Endothelial cell of umbilical vein (primary cell): ENCODE measurements at regions of chr7 and their contacts with region 1.

Region 1: DNA sequence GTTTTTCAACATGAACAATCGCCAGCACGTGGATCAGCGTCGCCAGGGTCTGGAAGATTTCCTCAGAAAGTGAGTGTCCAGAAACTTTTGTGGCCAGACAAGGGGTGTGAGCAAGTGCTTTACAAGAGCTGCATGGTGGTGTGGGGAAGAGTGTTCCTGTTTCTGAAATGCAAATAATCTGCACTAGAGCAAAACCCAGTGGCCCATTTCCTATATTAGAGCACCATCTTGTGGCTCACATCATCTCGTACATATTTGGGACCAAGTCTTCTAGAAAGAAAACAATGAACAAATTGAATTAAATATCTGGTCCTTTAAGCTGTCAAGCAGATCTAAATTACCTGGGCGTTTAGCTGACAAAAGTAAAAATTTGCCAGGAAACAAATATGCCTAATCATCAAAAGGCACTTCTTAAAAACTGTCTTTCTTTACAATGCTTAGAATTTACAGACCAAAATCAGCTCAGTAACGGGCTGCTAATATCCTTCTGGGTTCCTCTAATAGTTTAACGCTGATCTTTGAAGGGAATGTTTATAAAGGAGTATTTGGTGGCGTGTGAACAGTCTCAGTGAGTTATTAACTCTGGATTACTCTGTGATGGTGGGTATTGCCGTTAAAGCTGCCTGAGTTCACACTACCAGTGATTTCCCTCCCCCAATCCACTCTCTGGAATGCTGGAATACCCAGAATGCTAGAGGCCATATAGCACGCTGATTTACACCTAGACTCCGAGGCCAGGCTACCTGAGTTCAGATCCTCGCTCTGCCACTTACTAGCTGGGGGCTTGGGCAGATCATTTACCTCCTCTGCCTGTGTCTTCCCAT is 73.6 kb downstream of the SNX10 start:
- DNase-seq: peak; percentile 88
- H3K4me3 ChIP-seq: no peak overlapping the region
- H3K27ac ChIP-seq: no peak overlapping the region
- H3K4me1 ChIP-seq: peaks cover 15% of the 10 kb centered on the region
- H3K27me3 ChIP-seq: peaks cover 0 to 8% of the 10 kb centered on the region in 2 experiments
- CTCF ChIP-seq: peak; percentile 56 to 60
- POLR2A ChIP-seq: no peak

Region 2: DNA sequence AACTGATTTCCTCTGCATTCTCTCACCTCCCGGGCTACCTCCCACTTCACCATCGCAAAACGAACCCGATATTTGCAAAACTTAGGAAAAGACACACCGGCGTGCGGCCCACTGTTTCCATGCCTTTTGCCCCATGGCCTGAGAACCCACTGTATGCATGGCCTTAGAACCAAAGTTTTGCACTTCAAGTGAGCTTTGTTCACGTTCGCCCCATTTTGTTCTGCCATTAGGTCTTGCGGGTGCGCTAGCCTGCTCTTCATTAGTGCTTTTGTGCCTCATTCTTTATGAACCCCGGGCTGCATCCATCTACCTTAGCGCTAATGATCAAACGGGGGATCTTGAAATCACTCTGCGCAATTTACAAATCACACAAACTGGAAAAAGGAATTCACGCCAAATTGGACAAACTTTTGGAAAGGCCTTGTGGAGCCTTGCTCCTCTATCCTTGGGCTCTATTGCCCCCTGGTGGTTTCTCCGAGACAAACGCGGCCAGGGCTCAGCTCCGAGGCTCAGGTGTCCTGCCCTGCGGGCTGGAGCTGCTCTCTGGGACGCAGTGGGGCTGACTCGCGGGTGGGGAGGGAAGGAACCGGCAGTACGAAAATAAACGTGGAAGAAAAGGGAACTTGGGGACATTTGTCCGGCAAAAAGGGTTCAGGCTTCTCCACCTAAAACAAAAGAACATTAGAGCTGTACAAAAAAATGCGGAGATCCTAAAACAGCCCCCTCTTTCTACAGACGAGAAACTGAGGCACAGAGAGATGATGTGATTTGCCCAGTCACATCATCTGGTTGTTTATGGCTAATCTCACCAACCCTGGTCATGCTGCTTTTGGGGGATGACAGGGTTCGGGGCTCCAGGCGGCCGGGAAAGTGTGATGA is 513.7 kb before region 1 on chr7:
- CTCF ChIA-PET with region 1: interaction called, 13 read pairs
- POLR2A ChIA-PET with region 1: interaction called, 3 read pairs
- dilution Hi-C with region 1: no loop called
- intact Hi-C with region 1: loop called (anchors 1 kb)
- DNase-seq: peak; percentile 79
- H3K4me3 ChIP-seq: no peak overlapping the region
- H3K27ac ChIP-seq: no peak overlapping the region
- H3K4me1 ChIP-seq: peaks cover 30% of the 10 kb centered on the region
- H3K27me3 ChIP-seq: peaks cover 9 to 11% of the 10 kb centered on the region in 2 experiments
- CTCF ChIP-seq: peak; percentile 77 to 87
- POLR2A ChIP-seq: no peak

Region 3: GRCh38 chr7:26090927-26091519 is 274.3 kb before region 1 on chr7:
- CTCF ChIA-PET with region 1: interaction called, 233 read pairs
- POLR2A ChIA-PET with region 1: no interaction called
- dilution Hi-C with region 1: no loop called
- intact Hi-C with region 1: loop called (anchors 1 kb)
- DNase-seq: peak; percentile 74
- H3K4me3 ChIP-seq: no peak overlapping the region
- H3K27ac ChIP-seq: no peak overlapping the region
- H3K4me1 ChIP-seq: no peaks in the 10 kb centered on the region
- H3K27me3 ChIP-seq: peaks cover 0 to 3% of the 10 kb centered on the region in 2 experiments
- CTCF ChIP-seq: peak; percentile 54 to 62
- POLR2A ChIP-seq: no peak

Region 4: GRCh38 chr7:26328498-26329390 is 36.5 kb before region 1 on chr7:
- CTCF ChIA-PET with region 1: no interaction called
- POLR2A ChIA-PET with region 1: no interaction called
- dilution Hi-C with region 1: no loop called
- intact Hi-C with region 1: no loop called
- DNase-seq: no peak
- H3K4me3 ChIP-seq: no peak overlapping the region
- H3K27ac ChIP-seq: no peak overlapping the region
- H3K4me1 ChIP-seq: no peaks in the 10 kb centered on the region
- H3K27me3 ChIP-seq: no peaks in the 10 kb centered on the region
- CTCF ChIP-seq: no peak
- POLR2A ChIP-seq: no peak

Region 5: DNA sequence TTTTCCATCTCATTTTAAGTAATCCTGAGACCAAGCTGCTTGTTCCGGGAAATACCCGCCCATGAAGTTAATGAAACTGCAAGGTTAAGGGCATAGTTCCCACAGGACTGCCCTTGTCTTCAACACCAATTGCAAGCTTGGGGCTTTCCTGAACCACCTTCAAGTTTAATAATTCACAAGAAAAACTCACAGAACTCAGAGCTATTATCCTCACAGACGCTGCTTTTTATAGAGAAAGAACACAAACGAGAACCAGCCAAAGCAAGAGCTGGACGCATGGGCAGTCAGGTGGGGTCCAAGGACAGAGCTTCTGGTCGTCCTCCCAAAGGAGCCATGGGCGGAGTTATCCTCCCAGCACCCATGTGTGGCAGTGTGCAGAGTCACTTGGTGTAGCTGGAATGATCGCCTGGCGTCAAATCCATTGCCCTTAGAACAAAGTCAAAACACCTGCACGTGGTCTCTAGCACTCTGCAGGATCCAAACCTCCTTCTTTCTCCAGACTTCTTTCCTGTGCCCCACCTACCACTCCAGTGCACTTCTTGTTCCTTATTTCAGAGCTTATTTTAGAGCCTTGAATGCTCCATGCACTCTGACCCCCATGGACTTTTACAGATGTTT is 16.9 kb before region 1 on chr7:
- CTCF ChIA-PET with region 1: interaction called, 10 read pairs
- POLR2A ChIA-PET with region 1: no interaction called
- dilution Hi-C with region 1: no loop called
- intact Hi-C with region 1: no loop called
- DNase-seq: no peak
- H3K4me3 ChIP-seq: no peak overlapping the region
- H3K27ac ChIP-seq: no peak overlapping the region
- H3K4me1 ChIP-seq: no peaks in the 10 kb centered on the region
- H3K27me3 ChIP-seq: peaks cover 0 to 7% of the 10 kb centered on the region in 2 experiments
- CTCF ChIP-seq: no peak
- POLR2A ChIP-seq: no peak

Region 6: DNA sequence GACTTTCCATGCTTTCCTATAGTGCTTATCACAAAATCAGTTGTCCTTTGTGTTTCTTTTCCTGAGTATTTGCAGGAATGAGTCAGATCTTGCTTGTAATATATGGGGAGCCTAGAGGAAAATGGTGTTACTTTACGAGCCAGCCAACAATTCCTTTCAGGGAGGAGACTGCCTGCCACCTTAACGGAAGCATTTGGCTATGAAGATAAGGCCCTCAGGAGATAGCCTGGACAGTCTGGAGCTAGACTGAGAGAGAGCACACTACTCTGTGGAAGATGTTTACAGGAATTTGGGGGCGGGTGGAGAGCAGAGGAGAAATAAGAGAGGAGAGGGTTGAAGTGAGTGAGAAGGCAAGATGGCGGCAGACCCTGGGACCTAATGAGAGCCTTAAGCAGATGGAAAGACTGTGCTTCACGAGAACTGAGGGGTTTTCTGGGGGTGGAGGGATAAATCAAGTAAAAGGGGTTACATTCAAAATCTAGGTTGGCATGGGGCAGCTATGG is 52.7 kb after region 1 on chr7:
- CTCF ChIA-PET with region 1: interaction called, 12 read pairs
- POLR2A ChIA-PET with region 1: no interaction called
- dilution Hi-C with region 1: no loop called
- intact Hi-C with region 1: no loop called
- DNase-seq: peak; percentile 98
- H3K4me3 ChIP-seq: peak overlapping the region in 1 of 3 experiments; percentile 30
- H3K27ac ChIP-seq: peak overlapping the region; percentile 99
- H3K4me1 ChIP-seq: peaks cover 23% of the 10 kb centered on the region
- H3K27me3 ChIP-seq: no peaks in the 10 kb centered on the region
- CTCF ChIP-seq: no peak
- POLR2A ChIP-seq: no peak

Region 7: GRCh38 chr7:26653430-26653911 is 288.2 kb after region 1 on chr7:
- CTCF ChIA-PET with region 1: interaction called, 31 read pairs
- POLR2A ChIA-PET with region 1: no interaction called
- dilution Hi-C with region 1: no loop called
- intact Hi-C with region 1: no loop called
- DNase-seq: peak; percentile 89
- H3K4me3 ChIP-seq: no peak overlapping the region
- H3K27ac ChIP-seq: no peak overlapping the region
- H3K4me1 ChIP-seq: peaks cover 10% of the 10 kb centered on the region
- H3K27me3 ChIP-seq: peaks cover 0 to 3% of the 10 kb centered on the region in 2 experiments
- CTCF ChIP-seq: no peak
- POLR2A ChIP-seq: no peak

Region 8: GRCh38 chr7:27143023-27143949 is 778.0 kb after region 1 on chr7 and contains the start of gene HOXA5:
- CTCF ChIA-PET with region 1: interaction called, 72 read pairs
- POLR2A ChIA-PET with region 1: no interaction called
- dilution Hi-C with region 1: no loop called
- intact Hi-C with region 1: no loop called
- DNase-seq: peak; percentile 97
- H3K4me3 ChIP-seq: peak within 1 kb of the TSS; percentile 29 to 84 (median 65)
- H3K27ac ChIP-seq: peak within 1 kb of the TSS; percentile 82
- H3K4me1 ChIP-seq: peaks cover 73% of the 10 kb centered on the region
- H3K27me3 ChIP-seq: no peaks in the 10 kb centered on the region
- CTCF ChIP-seq: peak; percentile 83 to 96
- POLR2A ChIP-seq: peak; percentile 86
- total RNA-seq, gene HOXA5: 18.8 and 21.4 TPM in 2 replicates